ENCODE measurements at regions of chr14 and their contacts with region 1.

Region 1: DNA sequence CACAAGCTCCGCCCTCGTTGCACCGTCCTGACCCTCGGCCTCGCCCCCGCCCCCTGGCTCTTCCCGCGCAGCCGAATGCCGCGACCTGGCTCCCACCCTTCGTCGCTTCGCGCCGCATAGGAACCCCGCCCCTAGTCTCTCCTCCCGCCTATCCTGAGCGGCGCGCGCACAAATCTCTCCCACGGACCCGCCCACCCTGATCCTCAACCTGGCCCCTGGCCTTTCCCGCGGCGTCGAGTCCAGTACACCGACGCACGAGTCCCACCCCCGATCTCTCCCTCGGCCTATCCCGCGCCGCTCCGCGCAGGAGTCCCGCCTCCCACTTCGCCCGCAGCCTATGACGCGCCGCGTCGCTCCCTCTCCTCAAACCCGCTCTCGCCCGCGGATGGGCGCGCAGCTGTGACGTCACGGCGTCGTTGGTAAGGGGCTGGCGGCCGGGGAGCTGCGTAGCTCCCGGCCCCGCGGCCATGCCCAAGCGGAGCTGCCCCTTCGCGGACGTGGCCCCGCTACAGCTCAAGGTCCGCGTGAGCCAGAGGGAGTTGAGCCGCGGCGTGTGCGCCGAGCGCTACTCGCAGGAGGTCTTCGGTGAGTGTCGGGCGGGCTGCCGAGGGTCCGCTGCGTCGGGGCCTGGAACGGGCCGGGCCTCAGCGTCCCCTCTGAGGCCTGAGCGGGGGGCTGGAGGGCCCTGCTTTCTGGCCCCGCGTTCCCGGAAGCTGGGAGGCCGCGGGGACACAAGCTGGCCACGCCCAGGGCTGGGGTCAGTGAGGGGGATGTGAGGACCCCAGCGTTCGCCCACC is at the start of gene SIVA1:
- DNase-seq: peak; percentile 100
- H3K4me3 Mint-ChIP-seq: peak within 1 kb of the TSS; percentile 87
- H3K27ac Mint-ChIP-seq: peak within 1 kb of the TSS; percentile 80
- H3K4me1 Mint-ChIP-seq: peaks cover 24% of the 10 kb centered on the region
- H3K27me3 Mint-ChIP-seq: no peaks in the 10 kb centered on the region
- total RNA-seq, gene SIVA1: 97.6 to 109 TPM

Region 2: DNA sequence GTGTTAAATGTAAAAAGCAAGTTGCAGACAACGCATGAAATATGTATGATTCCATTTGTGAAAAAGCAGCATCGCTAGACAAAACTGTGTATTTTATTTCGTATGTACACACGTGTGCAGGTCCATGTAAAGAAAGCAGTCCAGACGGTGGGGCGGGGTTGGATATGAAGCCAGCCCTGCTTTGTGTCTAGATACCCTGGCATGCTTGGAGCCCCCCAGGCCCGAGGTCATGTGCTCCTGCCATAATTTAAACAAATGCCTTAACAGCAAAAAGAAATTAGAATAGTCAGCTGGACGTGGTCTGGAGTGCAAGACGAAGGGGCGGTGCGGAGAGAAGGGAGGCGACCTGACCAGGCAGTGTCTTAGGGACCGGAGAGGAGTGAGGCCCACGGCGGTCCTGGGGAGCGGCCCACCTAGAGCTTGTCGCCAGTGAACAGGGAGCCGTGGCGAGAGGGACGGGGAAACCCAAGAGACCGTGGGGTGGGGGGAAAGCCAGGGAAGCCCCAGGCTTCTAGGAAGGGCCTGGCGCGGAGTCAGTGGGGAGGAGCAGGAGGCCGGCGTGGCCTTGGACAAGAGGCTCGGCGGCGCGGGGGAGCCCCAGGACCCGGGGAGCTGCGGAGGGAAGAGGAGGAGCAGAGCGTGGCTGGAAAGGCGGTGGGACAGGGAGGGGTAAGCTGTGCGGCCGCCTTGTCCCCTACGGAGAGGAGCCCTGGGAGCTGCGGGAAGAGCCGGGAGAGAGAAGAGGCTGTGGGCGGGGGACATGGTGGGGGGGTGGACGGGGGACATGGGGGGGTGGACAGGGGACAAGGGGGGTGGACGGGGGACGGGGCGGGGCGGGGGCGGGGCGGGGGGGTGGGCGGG is 291.9 kb before region 1 on chr14:
- CTCF ChIA-PET with region 1: no interaction called
- POLR2A ChIA-PET with region 1: no interaction called
- intact Hi-C with region 1: no loop called
- DNase-seq: no peak
- H3K4me3 Mint-ChIP-seq: no peak overlapping the region
- H3K27ac Mint-ChIP-seq: no peak overlapping the region
- H3K4me1 Mint-ChIP-seq: peaks cover 11% of the 10 kb centered on the region
- H3K27me3 Mint-ChIP-seq: peaks cover 42% of the 10 kb centered on the region

Region 3: DNA sequence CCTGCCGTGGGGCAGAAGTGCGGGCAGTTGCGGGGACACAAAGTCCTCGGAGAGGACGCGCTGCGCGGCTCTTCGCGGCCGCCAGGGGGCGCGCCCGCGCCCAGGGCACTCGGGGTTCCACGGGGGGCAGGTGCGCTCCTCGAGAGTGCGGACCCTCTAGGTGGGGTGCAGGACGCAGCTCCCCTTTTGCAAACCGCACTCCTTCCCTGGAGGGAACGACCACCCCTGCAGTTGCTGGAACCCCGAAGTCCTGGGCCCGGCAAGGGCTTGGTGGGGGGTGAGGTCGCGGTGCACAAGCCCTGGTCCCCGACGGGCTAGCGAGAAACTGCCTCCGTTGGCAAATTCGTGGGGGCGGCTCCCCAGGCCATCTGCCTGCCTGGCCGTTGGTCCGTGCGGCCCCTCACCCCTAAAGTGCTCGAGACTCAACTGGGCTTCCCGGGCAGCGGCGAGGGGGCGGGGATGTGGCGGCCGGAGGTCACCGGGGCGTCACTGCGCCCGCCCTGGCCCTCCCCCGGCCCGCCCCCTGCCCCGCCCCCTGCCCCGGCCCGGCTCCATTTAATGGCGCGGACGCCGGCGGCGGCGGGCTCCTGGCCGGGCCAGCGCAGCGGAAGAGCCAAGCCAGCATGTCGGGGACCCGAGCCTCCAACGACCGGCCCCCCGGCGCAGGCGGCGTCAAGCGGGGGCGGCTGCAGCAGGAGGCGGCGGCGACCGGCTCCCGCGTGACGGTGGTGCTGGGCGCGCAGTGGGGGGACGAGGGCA is 29.1 kb before region 1 on chr14 and contains the start of gene ADSS1:
- CTCF ChIA-PET with region 1: interaction called, 12 read pairs
- POLR2A ChIA-PET with region 1: interaction called, 5 read pairs
- intact Hi-C with region 1: loop called (anchors 1 kb)
- DNase-seq: peak; percentile 66
- H3K4me3 Mint-ChIP-seq: peak within 1 kb of the TSS; percentile 61
- H3K27ac Mint-ChIP-seq: no peak within 1 kb of the TSS
- H3K4me1 Mint-ChIP-seq: no peaks in the 10 kb centered on the region
- H3K27me3 Mint-ChIP-seq: no peaks in the 10 kb centered on the region
- total RNA-seq, gene ADSS1: 2.3 to 3.3 TPM

Region 4: GRCh38 chr14:104800015-104800770 is 47.3 kb after region 1 on chr14:
- CTCF ChIA-PET with region 1: interaction called, 3 read pairs
- POLR2A ChIA-PET with region 1: no interaction called
- intact Hi-C with region 1: loop called (anchors 1 kb)
- DNase-seq: peak; percentile 84
- H3K4me3 Mint-ChIP-seq: peak overlapping the region; percentile 36
- H3K27ac Mint-ChIP-seq: peak overlapping the region; percentile 52
- H3K4me1 Mint-ChIP-seq: peaks cover 27% of the 10 kb centered on the region
- H3K27me3 Mint-ChIP-seq: no peaks in the 10 kb centered on the region

Region 5: GRCh38 chr14:104926619-104927431 is 173.9 kb after region 1 on chr14:
- CTCF ChIA-PET with region 1: no interaction called
- POLR2A ChIA-PET with region 1: no interaction called
- intact Hi-C with region 1: no loop called
- DNase-seq: no peak
- H3K4me3 Mint-ChIP-seq: no peak overlapping the region
- H3K27ac Mint-ChIP-seq: no peak overlapping the region
- H3K4me1 Mint-ChIP-seq: peaks cover 3% of the 10 kb centered on the region
- H3K27me3 Mint-ChIP-seq: peaks cover 2% of the 10 kb centered on the region

Region 6: DNA sequence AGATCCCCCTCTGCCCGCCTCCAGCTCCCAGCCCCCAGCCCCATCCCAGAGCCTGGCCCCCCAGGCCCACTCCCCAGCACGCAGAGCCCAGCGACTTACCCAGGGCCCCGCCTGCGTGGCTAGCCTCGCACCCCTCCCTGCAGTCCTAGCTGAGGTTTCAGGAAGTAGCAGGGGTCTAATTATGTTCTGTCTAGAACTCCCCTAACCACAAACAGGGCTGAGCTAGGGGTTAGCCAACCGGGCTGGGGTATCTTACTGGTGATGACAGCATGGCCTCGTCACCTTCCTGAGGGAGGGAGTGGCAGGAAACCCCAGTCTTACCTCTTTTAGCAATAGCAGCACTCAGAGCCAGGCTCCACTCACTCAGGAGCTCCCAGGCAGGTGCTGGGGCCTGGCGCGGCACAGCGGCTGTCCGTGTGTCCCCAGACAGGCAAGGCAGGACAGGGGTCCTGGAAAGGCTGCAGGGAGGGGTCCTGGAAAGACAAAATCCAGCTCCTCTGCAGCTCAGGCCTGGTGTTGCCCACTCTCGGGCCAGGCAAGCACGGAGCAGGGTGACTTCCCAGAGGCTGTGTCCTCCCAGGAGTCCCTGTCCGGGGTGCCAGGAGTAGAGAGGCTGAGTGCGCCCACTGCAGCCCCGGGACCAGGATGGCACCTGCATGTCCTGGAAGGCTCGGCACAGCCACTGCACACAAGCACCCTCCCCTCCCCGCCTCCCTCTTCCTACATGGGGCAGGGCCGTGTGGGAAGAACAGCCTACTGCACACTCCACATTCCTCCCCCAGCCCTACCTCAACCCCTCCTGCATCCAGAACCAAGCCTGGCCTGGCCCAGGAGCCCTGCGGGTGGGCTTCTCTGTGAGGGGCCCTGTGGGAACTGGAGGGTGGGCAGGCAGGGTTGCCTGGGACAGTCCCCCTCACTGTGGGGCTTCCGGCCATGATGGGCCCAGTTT is 312.6 kb after region 1 on chr14 and contains the start of gene GPR132:
- CTCF ChIA-PET with region 1: interaction called, 3 read pairs
- POLR2A ChIA-PET with region 1: no interaction called
- intact Hi-C with region 1: loop called (anchors 1 kb)
- DNase-seq: peak; percentile 95
- H3K4me3 Mint-ChIP-seq: peak within 1 kb of the TSS; percentile 94
- H3K27ac Mint-ChIP-seq: peak within 1 kb of the TSS; percentile 86
- H3K4me1 Mint-ChIP-seq: peaks cover 70% of the 10 kb centered on the region
- H3K27me3 Mint-ChIP-seq: no peaks in the 10 kb centered on the region
- total RNA-seq, gene GPR132: 33.4 to 34.2 TPM

Measured in activated CD4-positive, alpha-beta memory T cell treated with anti-CD3 and anti-CD28 coated beads for 36 hours (primary cell).